ENCODE measurements at regions of chr1 and their contacts with region 1.

Region 1: GRCh38 chr1:108512239-108512981 is 47.5 kb upstream of the EEIG2 start:
- DNase-seq: peak; percentile 50
- ATAC-seq: peak; percentile 82
- H3K4me3 ChIP-seq: no peak overlapping the region
- H3K27ac ChIP-seq: no peak overlapping the region
- H3K4me1 ChIP-seq: no peaks in the 10 kb centered on the region
- H3K27me3 ChIP-seq: peaks cover 9% of the 10 kb centered on the region
- CTCF ChIP-seq: peak; percentile 94
- POLR2A ChIP-seq: no peak
- RAD21 ChIP-seq: peak; percentile 93

Region 2: DNA sequence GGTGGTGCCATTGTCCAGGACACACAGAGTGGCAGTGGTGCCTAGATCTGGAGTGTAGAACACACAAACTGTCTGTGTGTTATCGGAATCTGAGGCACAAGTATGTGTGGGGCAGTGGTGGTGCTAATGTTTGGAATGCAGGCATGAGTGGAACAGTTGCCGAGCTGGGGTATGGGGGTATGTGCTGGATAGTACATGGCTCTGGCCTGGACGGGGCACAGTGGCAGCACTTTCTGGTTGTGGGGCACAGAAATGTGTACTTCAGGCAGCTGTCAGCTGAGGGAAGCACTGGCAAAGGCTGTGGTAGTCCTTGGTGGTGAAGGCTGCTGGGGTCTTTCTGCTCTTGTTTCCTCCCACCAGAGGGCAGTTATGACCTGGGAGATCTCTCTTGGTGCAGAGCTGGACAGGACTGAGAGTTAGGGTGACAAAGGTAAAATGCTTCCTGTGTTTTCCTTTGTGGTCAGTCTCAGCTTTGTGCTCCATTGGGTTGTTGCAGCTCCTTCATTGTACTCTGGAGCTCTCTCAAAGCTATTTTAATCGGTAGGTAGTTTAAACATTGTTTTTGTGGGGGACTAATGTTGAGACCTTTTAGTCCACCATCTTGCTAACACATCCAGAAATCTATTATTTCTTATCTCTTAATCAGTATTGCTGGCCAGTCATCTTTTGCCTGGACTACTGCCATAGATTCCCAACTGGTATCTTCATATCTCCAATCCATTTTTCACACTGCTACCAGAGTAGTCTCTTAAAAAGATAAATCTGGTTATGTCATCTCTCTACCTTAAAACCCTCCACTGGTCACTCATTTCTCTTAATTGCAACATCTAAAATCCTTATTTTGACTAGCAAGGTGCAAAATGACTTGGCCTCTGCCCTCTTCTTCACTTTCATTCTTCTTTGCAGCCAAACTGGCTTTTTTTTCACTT is 184.6 kb before region 1 on chr1:
- CTCF ChIA-PET with region 1: no interaction called
- POLR2A ChIA-PET with region 1: no interaction called
- dilution Hi-C with region 1: no loop called
- in situ Hi-C with region 1: no loop called
- intact Hi-C with region 1: no loop called
- DNase-seq: no peak
- ATAC-seq: no peak
- H3K4me3 ChIP-seq: no peak overlapping the region
- H3K27ac ChIP-seq: no peak overlapping the region
- H3K4me1 ChIP-seq: no peaks in the 10 kb centered on the region
- H3K27me3 ChIP-seq: no peaks in the 10 kb centered on the region
- CTCF ChIP-seq: no peak
- POLR2A ChIP-seq: no peak
- RAD21 ChIP-seq: no peak

Region 3: DNA sequence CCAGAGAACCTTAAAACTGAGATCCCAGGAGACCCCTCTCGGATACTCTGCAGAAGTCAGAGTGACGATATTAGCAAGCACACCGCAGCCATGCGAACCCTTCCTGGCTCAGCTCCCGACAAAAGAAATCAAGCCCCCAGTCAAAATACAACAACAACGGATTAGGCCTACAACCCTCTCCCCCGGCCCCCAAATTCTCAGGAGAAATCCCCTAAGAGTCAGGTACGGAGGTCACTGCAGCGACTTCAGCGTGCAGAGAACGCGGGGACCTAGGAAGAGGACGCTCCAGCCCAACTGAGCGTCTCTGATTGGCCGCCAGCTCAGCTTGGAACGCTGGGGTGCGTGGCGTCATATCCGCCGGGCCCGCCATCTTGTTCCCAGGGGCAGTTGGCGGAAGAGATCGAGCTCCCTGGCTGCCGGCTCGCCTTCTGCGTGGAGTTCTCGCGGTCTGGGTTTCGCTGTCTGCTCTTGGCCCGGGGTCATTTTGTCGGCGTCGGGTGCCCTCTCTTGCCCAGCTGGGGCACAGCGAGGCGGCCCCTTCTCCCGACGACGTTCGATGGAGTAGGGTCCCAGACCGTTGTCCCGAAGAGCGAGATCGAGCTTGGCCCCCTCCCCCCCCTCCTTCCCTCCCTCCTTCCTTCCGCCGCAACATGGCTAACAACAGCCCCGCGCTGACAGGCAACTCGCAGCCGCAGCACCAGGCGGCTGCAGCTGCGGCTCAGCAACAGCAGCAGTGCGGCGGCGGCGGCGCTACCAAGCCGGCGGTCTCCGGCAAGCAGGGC is 179.7 kb after region 1 on chr1 and contains the start of gene PRPF38B:
- CTCF ChIA-PET with region 1: interaction called, 3 read pairs
- POLR2A ChIA-PET with region 1: no interaction called
- dilution Hi-C with region 1: no loop called
- in situ Hi-C with region 1: no loop called
- intact Hi-C with region 1: loop called (anchors 1 kb)
- DNase-seq: peak; percentile 87
- ATAC-seq: peak; percentile 97
- H3K4me3 ChIP-seq: peak within 1 kb of the TSS; percentile 84
- H3K27ac ChIP-seq: peak within 1 kb of the TSS; percentile 97
- H3K4me1 ChIP-seq: no peaks in the 10 kb centered on the region
- H3K27me3 ChIP-seq: no peaks in the 10 kb centered on the region
- CTCF ChIP-seq: no peak
- POLR2A ChIP-seq: peak; percentile 97
- RAD21 ChIP-seq: no peak
- total RNA-seq, gene PRPF38B: 9.0 and 15.0 TPM in 2 replicates